GM10248 (cell line): ENCODE measurements at regions of chr22 and their contacts with region 1.

Region 1: GRCh38 chr22:41697126-41697775 is 2.1 kb upstream of the MEI1 start:
- DNase-seq: peak; percentile 88
- CTCF ChIP-seq: peak; percentile 97

Region 2: DNA sequence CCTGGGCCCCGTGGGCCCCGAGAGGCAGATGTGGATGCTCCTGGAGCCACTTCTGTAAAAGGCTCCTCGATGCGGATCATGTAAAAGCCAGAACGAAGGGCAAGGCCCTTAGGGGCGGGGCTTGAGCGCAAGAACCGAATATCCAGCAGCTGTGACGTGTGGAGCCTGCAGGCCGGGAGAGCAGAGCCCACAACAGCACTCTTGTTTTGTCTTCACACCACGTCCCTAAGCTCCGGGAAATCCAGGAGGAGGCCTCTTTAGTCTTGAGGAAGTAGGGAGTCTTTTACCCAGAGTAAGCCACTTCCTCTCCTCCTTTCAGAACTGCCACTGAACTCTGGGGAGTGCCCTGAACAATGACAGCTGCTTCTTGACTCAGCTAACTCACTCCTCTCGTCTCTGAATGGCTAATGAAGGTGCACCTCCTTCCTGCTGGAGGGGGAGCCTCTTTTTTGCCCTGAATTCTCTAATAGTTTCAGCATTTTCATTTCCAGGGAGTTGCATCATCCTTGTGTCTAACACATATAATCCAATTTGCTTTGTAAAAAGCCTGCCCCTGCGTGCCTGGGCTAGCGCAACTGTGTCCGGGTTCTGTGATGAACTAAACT is 479.6 kb before region 1 on chr22:
- CTCF ChIA-PET with region 1: no interaction called
- POLR2A ChIA-PET with region 1: no interaction called
- DNase-seq: peak; percentile 77
- CTCF ChIP-seq: no peak

Region 3: DNA sequence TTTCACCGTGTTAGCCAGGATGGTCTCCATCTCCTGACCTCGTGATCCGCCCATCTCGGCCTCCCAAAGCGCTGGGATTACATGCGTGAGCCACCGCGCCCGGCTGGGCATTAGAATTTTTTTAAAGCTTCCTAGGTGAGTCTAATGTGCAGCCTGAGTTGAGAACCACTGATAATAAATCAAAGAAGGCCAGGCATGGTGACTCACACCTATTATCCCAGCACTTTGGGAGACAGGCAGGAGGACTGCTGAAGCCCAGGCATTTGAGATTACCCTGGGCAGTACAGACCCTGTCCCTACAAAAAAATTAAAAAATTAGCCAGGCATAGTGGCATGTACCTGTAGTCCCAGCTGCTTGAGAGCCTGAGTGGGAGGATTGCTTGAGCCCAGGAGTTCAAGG is 15.8 kb after region 1 on chr22:
- CTCF ChIA-PET with region 1: interaction called, 82 read pairs
- POLR2A ChIA-PET with region 1: no interaction called
- DNase-seq: no peak
- CTCF ChIP-seq: no peak

Region 4: GRCh38 chr22:41757502-41757901 is 60.3 kb after region 1 on chr22:
- CTCF ChIA-PET with region 1: interaction called, 15 read pairs
- POLR2A ChIA-PET with region 1: no interaction called
- DNase-seq: no peak
- CTCF ChIP-seq: no peak

Region 5: GRCh38 chr22:41780746-41781505 is 83.7 kb after region 1 on chr22:
- CTCF ChIA-PET with region 1: interaction called, 26 read pairs
- POLR2A ChIA-PET with region 1: no interaction called
- DNase-seq: peak; percentile 89
- CTCF ChIP-seq: no peak

Region 6: DNA sequence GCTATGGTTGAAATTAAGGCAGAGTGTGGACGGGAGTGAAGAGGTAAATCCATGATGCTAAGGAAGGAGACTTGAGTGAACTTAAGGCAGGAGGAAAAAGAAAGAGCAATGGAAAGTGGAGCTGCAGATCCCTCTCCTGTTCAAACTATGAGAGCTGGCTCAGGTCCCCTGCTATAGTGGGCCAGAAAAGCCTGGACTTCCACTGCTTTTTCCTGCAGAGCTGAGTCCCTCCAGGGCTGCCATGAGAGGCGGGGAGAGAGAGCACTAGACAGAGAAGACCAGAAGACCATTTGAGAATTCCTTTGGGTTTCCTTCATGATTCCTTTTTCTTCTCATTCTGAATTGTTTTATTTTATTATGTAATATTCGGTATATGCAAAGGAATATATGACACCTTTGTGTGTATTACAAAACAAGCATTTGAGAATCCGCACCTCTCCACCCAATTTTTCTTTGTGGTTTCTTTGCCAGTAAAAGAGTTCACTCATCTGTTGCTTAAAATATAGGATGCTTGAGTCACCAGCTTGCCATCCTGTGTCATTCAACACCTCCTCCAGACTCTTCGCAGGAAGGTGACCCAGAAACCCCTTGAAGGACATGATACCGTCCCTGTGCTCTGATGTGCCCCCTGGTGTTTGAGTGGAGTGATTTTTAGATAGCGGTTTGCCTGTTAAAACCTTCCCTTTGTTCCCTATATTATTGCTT is 160.1 kb after region 1 on chr22:
- CTCF ChIA-PET with region 1: interaction called, 32 read pairs
- POLR2A ChIA-PET with region 1: no interaction called
- DNase-seq: peak; percentile 62
- CTCF ChIP-seq: peak; percentile 55

Region 7: GRCh38 chr22:41946629-41947423 is 249.6 kb after region 1 on chr22 and contains the start of gene CENPM:
- CTCF ChIA-PET with region 1: interaction called, 81 read pairs
- POLR2A ChIA-PET with region 1: no interaction called
- DNase-seq: peak; percentile 90
- CTCF ChIP-seq: no peak

Region 8: DNA sequence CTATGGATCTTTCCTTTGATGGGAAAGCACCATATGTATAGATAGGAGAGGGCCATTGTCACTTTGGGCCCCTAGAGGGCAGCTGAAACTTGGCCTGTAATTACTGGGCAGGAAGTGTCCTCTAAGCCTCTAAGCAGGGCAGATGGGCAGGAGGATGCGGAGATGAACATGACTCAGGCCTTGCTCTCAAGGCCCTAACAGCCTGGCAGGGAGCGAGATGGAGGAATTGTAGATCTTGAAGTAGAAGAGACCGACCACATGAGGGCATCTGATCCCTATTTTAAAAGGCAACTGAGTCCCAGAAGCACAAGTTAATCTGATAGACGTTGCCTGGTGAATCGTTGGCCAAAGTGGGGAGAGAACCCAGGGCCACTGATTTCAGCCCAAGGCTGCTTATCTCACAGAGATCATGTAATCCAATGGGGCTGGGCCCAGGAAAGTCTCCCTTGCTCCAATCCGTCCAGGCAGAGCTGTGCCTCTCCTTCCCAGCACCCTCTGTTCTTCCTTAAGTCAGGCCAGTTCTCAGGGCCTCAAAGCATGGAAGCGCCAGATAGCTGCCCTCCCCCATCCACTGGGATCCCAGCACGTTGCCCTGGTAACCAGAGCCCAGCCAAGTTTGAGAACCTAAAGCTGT is 269.5 kb after region 1 on chr22:
- CTCF ChIA-PET with region 1: interaction called, 10 read pairs
- POLR2A ChIA-PET with region 1: no interaction called
- DNase-seq: peak; percentile 63
- CTCF ChIP-seq: peak; percentile 34

Region 9: GRCh38 chr22:42247596-42247995 is 550.3 kb after region 1 on chr22:
- CTCF ChIA-PET with region 1: no interaction called
- POLR2A ChIA-PET with region 1: no interaction called
- DNase-seq: no peak
- CTCF ChIP-seq: no peak